ENCODE measurements at regions of chr12 and their contacts with region 1.

Region 1: GRCh38 chr12:100404769-100405407 is 48.0 kb downstream of the SLC17A8 start:
- DNase-seq: peak; percentile 59
- H3K4me3 Mint-ChIP-seq: no peak overlapping the region
- H3K27ac Mint-ChIP-seq: no peak overlapping the region
- H3K4me1 Mint-ChIP-seq: no peaks in the 10 kb centered on the region
- H3K27me3 Mint-ChIP-seq: no peaks in the 10 kb centered on the region

Region 2: GRCh38 chr12:100234598-100235304 is 170.1 kb before region 1 on chr12:
- CTCF ChIA-PET with region 1: interaction called, 57 read pairs
- DNase-seq: peak; percentile 29
- H3K4me3 Mint-ChIP-seq: no peak overlapping the region
- H3K27ac Mint-ChIP-seq: no peak overlapping the region
- H3K4me1 Mint-ChIP-seq: no peaks in the 10 kb centered on the region
- H3K27me3 Mint-ChIP-seq: no peaks in the 10 kb centered on the region